Caco-2 (cell line): ENCODE measurements at regions of chr5 and their contacts with region 1.

Region 1: DNA sequence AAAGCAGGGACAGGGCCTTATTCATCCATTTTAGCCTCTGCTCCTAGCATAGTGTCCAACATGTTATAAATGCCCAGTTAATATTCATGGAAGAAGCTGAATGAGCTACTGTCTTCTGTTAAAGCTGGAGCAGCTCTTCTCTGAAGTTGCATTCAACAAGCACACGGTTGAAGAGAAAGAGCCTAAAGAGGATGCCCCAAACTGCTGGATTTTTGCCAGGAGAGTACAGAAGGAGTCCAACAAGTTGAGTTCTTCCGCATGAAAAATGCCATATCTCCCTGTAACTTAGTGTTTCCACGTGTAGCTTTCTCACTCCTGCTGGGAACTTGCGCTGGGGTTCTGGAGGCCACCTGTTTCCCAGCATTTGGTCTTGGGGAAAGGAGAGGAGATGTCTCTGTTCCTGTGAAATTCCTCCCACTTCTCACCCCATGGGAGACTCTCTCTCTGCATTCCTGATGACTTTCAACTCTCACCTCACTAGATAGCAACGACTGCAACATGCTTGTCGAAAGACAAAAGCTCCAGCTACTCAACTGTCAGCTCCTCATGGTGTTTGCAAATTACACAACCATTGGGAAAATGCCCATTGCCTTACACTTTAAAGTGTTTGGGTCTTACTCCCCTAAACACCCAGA is 122.8 kb downstream of the KIF4B start:
- DNase-seq: no peak
- H3K4me3 ChIP-seq: no peak overlapping the region
- H3K4me3 Mint-ChIP-seq: no peak overlapping the region
- H3K27ac Mint-ChIP-seq: no peak overlapping the region
- H3K4me1 ChIP-seq: no peaks in the 10 kb centered on the region
- H3K4me1 Mint-ChIP-seq: no peaks in the 10 kb centered on the region
- H3K27me3 ChIP-seq: no peaks in the 10 kb centered on the region
- H3K27me3 Mint-ChIP-seq: peaks cover 28% of the 10 kb centered on the region
- CTCF ChIP-seq: no peak

Region 2: DNA sequence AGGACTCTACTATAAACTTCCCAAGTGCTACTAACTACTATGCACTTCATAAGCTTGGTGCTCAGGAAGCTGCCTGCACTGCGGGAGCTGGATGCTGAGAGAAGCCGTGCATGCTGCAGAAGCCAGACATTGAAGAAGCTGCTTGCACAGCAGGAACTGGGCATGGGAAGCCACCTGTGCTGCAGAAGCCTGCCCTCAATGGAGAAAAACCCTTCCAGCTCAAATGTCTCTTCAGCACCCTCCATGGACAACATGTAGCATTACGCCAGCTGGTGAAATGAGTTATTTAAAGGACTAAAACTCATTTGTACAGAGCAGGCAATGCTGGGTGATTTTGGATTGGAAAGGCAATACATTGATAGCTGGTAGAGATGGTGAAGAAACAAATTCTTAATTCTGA is 124.5 kb after region 1 on chr5:
- CTCF ChIA-PET with region 1: interaction called, 3 read pairs
- POLR2A ChIA-PET with region 1: no interaction called
- intact Hi-C with region 1: loop called (anchors 1 kb)
- DNase-seq: peak; percentile 18 to 42
- H3K4me3 ChIP-seq: no peak overlapping the region
- H3K4me3 Mint-ChIP-seq: no peak overlapping the region
- H3K27ac Mint-ChIP-seq: no peak overlapping the region
- H3K4me1 ChIP-seq: no peaks in the 10 kb centered on the region
- H3K4me1 Mint-ChIP-seq: no peaks in the 10 kb centered on the region
- H3K27me3 ChIP-seq: no peaks in the 10 kb centered on the region
- H3K27me3 Mint-ChIP-seq: peaks cover 3% of the 10 kb centered on the region
- CTCF ChIP-seq: peak in 1 of 2 experiments; percentile 28